ENCODE measurements at regions of chr9 and their contacts with region 1.

Region 1: GRCh38 chr9:12702160-12702758 is 9.1 kb downstream of the TYRP1 start:
- DNase-seq: no peak
- ATAC-seq: no peak
- H3K4me3 ChIP-seq: no peak overlapping the region
- H3K4me3 Mint-ChIP-seq: no peak overlapping the region
- H3K27ac ChIP-seq: no peak overlapping the region
- H3K27ac Mint-ChIP-seq: no peak overlapping the region
- H3K4me1 ChIP-seq: no peaks in the 10 kb centered on the region
- H3K4me1 Mint-ChIP-seq: no peaks in the 10 kb centered on the region
- H3K27me3 ChIP-seq: no peaks in the 10 kb centered on the region
- H3K27me3 Mint-ChIP-seq: no peaks in the 10 kb centered on the region
- CTCF ChIP-seq: no peak

Region 2: GRCh38 chr9:11349187-11349586 is 1353.1 kb before region 1 on chr9:
- CTCF ChIA-PET with region 1: no interaction called
- POLR2A ChIA-PET with region 1: no interaction called
- intact Hi-C with region 1: loop called (anchors 10 kb)
- DNase-seq: no peak
- ATAC-seq: no peak
- H3K4me3 ChIP-seq: no peak overlapping the region
- H3K4me3 Mint-ChIP-seq: no peak overlapping the region
- H3K27ac ChIP-seq: no peak overlapping the region
- H3K27ac Mint-ChIP-seq: no peak overlapping the region
- H3K4me1 ChIP-seq: no peaks in the 10 kb centered on the region
- H3K4me1 Mint-ChIP-seq: no peaks in the 10 kb centered on the region
- H3K27me3 ChIP-seq: no peaks in the 10 kb centered on the region
- H3K27me3 Mint-ChIP-seq: no peaks in the 10 kb centered on the region
- CTCF ChIP-seq: no peak